ENCODE measurements at regions of chr5 and their contacts with region 1.

Region 1: GRCh38 chr5:96687812-96688453 is 25.8 kb downstream of the CAST start:
- DNase-seq: no peak
- H3K4me3 Mint-ChIP-seq: no peak overlapping the region
- H3K27ac Mint-ChIP-seq: no peak overlapping the region
- H3K4me1 Mint-ChIP-seq: peaks cover 30% of the 10 kb centered on the region
- H3K27me3 Mint-ChIP-seq: no peaks in the 10 kb centered on the region

Region 2: GRCh38 chr5:96671441-96671840 is 16.5 kb before region 1 on chr5:
- CTCF ChIA-PET with region 1: interaction called, 15 read pairs
- POLR2A ChIA-PET with region 1: no interaction called
- intact Hi-C with region 1: no loop called
- DNase-seq: no peak
- H3K4me3 Mint-ChIP-seq: no peak overlapping the region
- H3K27ac Mint-ChIP-seq: no peak overlapping the region
- H3K4me1 Mint-ChIP-seq: peaks cover 46% of the 10 kb centered on the region
- H3K27me3 Mint-ChIP-seq: no peaks in the 10 kb centered on the region

Measured in activated CD4-positive, alpha-beta memory T cell treated with anti-CD3 and anti-CD28 coated beads for 36 hours (primary cell).